K562 (cell line): ENCODE measurements at regions of chr2 and their contacts with region 1.

Region 1: GRCh38 chr2:195575879-195576401 is 81.1 kb upstream of the SLC39A10 start:
- DNase-seq: peak in 1 of 4 experiments; percentile 32
- ATAC-seq: no peak; the same call in 2 of the 3 replicates
- H3K4me3 ChIP-seq: no peak overlapping the region
- H3K27ac ChIP-seq: no peak overlapping the region
- H3K4me1 ChIP-seq: peaks cover 0 to 14% of the 10 kb centered on the region in 2 experiments; a peak in 3 of 5 replicates
- H3K27me3 ChIP-seq: no peaks in the 10 kb centered on the region
- CTCF ChIP-seq: peak in 1 of 3 experiments; percentile 47; a peak in 2 of 6 replicates
- EP300 ChIP-seq: no peak
- POLR2A ChIP-seq: no peak
- RAD21 ChIP-seq: peak; percentile 38 to 71

Region 2: DNA sequence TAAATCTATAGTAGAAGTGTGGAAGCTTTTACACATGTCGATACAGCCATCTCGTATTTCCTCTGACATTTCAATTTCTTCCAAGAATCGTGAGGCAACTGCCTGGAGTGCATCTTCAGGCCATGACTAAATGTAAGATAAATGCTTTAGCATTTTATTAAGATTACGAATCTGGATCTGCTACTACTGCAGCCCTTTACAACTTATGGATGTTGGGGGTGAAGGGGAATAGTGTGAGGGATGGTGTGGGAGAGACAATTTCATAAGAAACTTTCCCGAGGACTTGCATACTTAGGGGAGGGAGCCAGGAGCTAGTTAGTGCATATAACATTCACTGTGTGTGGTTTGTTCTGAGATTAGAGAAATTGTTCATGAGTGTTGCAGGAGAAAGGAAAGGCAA is 285.9 kb after region 1 on chr2:
- CTCF ChIA-PET with region 1: no interaction called
- POLR2A ChIA-PET with region 1: no interaction called
- in situ Hi-C with region 1: no loop called
- intact Hi-C with region 1: no loop called
- DNase-seq: no peak
- ATAC-seq: no peak
- H3K4me3 ChIP-seq: no peak overlapping the region
- H3K27ac ChIP-seq: no peak overlapping the region
- H3K4me1 ChIP-seq: no peaks in the 10 kb centered on the region
- H3K27me3 ChIP-seq: no peaks in the 10 kb centered on the region
- CTCF ChIP-seq: no peak
- EP300 ChIP-seq: no peak
- POLR2A ChIP-seq: no peak
- RAD21 ChIP-seq: no peak

Region 3: GRCh38 chr2:195929531-195929930 is 353.6 kb after region 1 on chr2:
- CTCF ChIA-PET with region 1: no interaction called
- POLR2A ChIA-PET with region 1: no interaction called
- in situ Hi-C with region 1: no loop called
- intact Hi-C with region 1: loop called (anchors 5 kb)
- DNase-seq: no peak
- ATAC-seq: no peak
- H3K4me3 ChIP-seq: no peak overlapping the region
- H3K27ac ChIP-seq: no peak overlapping the region
- H3K4me1 ChIP-seq: no peaks in the 10 kb centered on the region
- H3K27me3 ChIP-seq: no peaks in the 10 kb centered on the region
- CTCF ChIP-seq: no peak
- EP300 ChIP-seq: no peak
- POLR2A ChIP-seq: no peak
- RAD21 ChIP-seq: no peak